ENCODE measurements at regions of chr3 and their contacts with region 1.

Region 1: GRCh38 chr3:48811524-48811923 is 36.1 kb downstream of the PRKAR2A start:
- DNase-seq: no peak
- H3K4me3 ChIP-seq: no peak overlapping the region
- H3K4me3 Mint-ChIP-seq: peak overlapping the region in 3 of 7 donors; percentile 7 to 28 (median 9)
- H3K27ac ChIP-seq: no peak overlapping the region
- H3K27ac Mint-ChIP-seq: peak overlapping the region; percentile 20 to 95 (median 92)
- H3K4me1 ChIP-seq: peaks cover 28% of the 10 kb centered on the region
- H3K4me1 Mint-ChIP-seq: peaks cover 36 to 57% (median 42%) of the 10 kb centered on the region in 3 donors
- H3K27me3 ChIP-seq: no peaks in the 10 kb centered on the region
- H3K27me3 Mint-ChIP-seq: no peaks in the 10 kb centered on the region

Region 2: DNA sequence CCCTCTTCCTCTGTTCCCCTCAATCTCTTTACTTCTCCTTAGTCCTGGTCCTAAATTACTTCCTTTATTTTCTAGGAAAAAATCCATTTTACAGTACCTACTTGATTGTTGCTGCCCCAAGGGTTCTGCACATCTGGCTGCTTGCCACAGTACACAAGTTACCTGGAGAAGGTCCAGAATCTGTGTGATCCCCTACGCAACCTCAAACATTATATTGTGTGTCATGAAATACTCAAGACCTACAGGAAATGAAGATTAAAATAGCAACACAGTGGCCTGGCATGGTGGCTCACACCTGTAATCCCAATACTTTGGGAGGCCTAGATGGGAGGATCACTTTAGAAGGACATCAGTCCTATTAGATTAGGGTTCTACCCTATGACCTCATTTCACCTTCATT is 12.5 kb before region 1 on chr3:
- CTCF ChIA-PET with region 1: no interaction called
- POLR2A ChIA-PET with region 1: no interaction called
- DNase-seq: no peak
- H3K4me3 ChIP-seq: no peak overlapping the region
- H3K4me3 Mint-ChIP-seq: no peak overlapping the region
- H3K27ac ChIP-seq: no peak overlapping the region
- H3K27ac Mint-ChIP-seq: peak overlapping the region in 2 of 8 donors; percentile 38 to 92
- H3K4me1 ChIP-seq: no peaks in the 10 kb centered on the region
- H3K4me1 Mint-ChIP-seq: peaks cover 4 to 8% (median 5%) of the 10 kb centered on the region in 3 donors
- H3K27me3 ChIP-seq: no peaks in the 10 kb centered on the region
- H3K27me3 Mint-ChIP-seq: no peaks in the 10 kb centered on the region

Region 3: DNA sequence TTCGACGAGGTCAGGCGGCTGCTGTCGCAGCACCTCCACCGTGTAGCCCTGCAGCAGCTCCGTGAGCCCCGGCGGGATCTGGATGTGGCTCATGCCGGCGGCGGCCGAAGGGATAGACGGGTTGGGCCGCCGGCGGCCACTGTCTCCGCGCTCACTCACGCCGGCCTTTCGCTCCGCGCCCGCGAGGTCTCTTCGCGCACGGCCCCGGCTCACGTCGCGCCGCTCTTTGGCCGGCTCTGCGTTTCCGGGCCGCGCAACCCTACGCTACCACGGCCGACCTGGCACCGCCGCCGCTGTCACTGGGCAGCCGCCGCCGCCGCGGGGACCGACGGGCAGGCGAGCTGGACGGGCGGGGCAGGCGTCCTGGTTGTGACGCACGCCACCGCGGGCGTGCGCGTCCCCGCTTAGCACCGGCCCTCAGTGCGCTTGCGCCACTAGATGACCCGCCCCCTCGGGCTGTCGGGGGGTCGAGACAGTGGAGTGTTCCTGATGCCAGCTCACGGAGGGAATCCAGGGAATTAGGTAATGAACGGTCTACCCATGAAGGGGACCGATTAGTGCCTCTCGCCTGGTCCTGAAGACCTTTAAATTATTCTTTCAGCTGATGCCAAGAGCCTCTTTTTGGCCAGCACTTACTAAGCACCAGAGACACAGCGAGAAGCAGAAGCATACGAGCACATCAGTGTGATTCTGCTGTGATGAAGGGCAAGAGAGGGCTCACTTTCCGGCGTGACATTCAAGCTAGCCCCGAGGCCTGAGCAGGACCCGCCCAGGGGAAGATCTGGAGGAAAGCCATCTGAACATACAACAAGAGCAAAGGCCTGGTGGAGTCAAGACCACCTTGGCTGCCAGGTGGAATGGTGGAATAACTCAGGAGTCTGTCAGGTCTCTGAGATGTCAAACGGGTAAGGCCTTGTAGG is 36.2 kb after region 1 on chr3 and contains the start of gene PRKAR2A:
- CTCF ChIA-PET with region 1: no interaction called
- POLR2A ChIA-PET with region 1: interaction called, 10 read pairs
- DNase-seq: peak; percentile 72 to 86 (median 81)
- H3K4me3 ChIP-seq: peak within 1 kb of the TSS; percentile 67
- H3K4me3 Mint-ChIP-seq: peak within 1 kb of the TSS; percentile 85 to 96 (median 94)
- H3K27ac ChIP-seq: peak within 1 kb of the TSS; percentile 79
- H3K27ac Mint-ChIP-seq: peak within 1 kb of the TSS; percentile 92 to 99 (median 98)
- H3K4me1 ChIP-seq: peaks cover 28% of the 10 kb centered on the region
- H3K4me1 Mint-ChIP-seq: peaks cover 26 to 36% (median 30%) of the 10 kb centered on the region in 3 donors
- H3K27me3 ChIP-seq: no peaks in the 10 kb centered on the region
- H3K27me3 Mint-ChIP-seq: no peaks in the 10 kb centered on the region
- total RNA-seq, gene PRKAR2A: 61.5 to 62.1 TPM

Region 4: DNA sequence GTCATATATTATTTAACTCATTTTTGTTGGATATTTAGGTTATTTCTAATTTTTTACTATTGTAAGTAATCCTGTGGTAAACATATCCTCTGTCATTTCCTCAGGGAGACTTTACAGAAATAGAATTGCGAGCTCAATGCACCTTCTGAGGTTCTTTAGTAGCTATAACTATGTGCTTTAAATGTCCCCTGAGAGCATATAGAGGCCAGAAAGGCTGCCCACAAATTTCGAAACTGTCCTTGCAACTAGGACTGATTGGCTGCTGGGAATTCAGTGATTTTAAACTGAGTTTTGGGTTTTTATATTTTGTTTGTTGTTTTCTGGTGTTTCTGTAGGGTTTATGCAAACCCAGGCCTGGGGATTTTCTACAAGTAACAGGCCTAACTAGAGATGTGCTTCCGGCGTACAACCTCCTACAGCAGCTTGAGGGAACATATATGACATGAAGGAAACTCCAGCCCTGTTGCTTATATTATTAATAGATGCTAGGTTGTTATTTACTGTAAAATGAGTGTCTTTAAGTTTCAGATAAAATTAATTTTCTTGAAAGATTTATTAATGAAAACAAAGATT is 149.4 kb after region 1 on chr3:
- CTCF ChIA-PET with region 1: no interaction called
- POLR2A ChIA-PET with region 1: no interaction called
- DNase-seq: no peak
- H3K4me3 ChIP-seq: no peak overlapping the region
- H3K4me3 Mint-ChIP-seq: no peak overlapping the region
- H3K27ac ChIP-seq: no peak overlapping the region
- H3K27ac Mint-ChIP-seq: peak overlapping the region in 1 of 8 donors; percentile 17
- H3K4me1 ChIP-seq: no peaks in the 10 kb centered on the region
- H3K4me1 Mint-ChIP-seq: peaks cover 6 to 10% (median 7%) of the 10 kb centered on the region in 3 donors
- H3K27me3 ChIP-seq: no peaks in the 10 kb centered on the region
- H3K27me3 Mint-ChIP-seq: no peaks in the 10 kb centered on the region